Posterior vena cava (tissue), 2 donors: ENCODE measurements at regions of chr11 and their contacts with region 1.

Region 1: DNA sequence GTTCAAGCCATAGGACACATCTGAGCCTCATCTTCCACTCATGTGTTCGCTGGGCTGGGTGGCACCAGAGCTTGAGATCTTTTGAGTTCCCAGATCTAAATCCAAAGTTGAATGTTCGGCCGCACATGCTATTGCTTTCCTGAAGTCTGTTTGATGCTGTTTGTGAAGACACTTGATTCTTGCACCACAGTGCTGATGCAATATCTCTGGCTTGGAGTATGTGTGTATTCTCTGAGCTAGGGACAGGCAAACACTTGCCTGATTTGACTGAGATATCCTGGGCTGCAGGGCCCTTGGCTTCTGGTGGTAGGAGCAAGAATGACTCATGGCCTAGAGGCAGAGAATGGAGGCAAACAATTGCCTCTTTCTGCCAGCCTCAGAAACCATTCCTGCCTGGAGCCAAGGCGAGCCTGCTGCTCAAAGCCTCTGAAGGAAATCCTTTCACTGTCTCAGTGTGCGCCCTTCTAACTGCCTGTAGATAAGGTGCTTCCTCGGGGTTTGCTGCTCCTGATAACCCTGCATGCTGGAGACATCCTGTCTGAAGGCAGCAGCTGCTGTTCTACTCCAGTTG is 73.0 kb downstream of the CYB5R2 start:
- DNase-seq: no peak

Region 2: GRCh38 chr11:8759634-8760033 is 1159.3 kb after region 1 on chr11:
- intact Hi-C with region 1: loop called in 1 of 2 experiments (anchors 5 kb)
- DNase-seq: no peak